ENCODE measurements at regions of chr2 and their contacts with region 1.

Region 1: GRCh38 chr2:230712443-230713330 is at the start of gene CAB39:
- DNase-seq: peak; percentile 93
- H3K4me3 ChIP-seq: peak within 1 kb of the TSS; percentile 90 to 100 (median 96)
- H3K27ac ChIP-seq: peak within 1 kb of the TSS; percentile 94 to 99 (median 98)
- H3K4me1 ChIP-seq: peaks cover 0 to 45% (median 38%) of the 10 kb centered on the region in 4 donors
- H3K27me3 ChIP-seq: no peaks in the 10 kb centered on the region
- CTCF ChIP-seq: peak in 3 of 4 experiments; percentile 27 to 81 (median 50)
- EP300 ChIP-seq: no peak
- POLR2A ChIP-seq: peak in 1 of 2 donors; percentile 20
- total RNA-seq, gene CAB39: 63.7 to 77.9 (median 73.4) TPM

Region 2: GRCh38 chr2:230798769-230799399 is 86.2 kb after region 1 on chr2:
- intact Hi-C with region 1: loop called (anchors 1 kb)
- DNase-seq: no peak
- H3K4me3 ChIP-seq: no peak overlapping the region
- H3K27ac ChIP-seq: peak overlapping the region in 1 of 4 donors; percentile 85
- H3K4me1 ChIP-seq: peaks cover 0 to 43% (median 31%) of the 10 kb centered on the region in 4 donors
- H3K27me3 ChIP-seq: no peaks in the 10 kb centered on the region
- CTCF ChIP-seq: peak; percentile 11 to 58 (median 49)
- EP300 ChIP-seq: no peak
- POLR2A ChIP-seq: no peak

Region 3: DNA sequence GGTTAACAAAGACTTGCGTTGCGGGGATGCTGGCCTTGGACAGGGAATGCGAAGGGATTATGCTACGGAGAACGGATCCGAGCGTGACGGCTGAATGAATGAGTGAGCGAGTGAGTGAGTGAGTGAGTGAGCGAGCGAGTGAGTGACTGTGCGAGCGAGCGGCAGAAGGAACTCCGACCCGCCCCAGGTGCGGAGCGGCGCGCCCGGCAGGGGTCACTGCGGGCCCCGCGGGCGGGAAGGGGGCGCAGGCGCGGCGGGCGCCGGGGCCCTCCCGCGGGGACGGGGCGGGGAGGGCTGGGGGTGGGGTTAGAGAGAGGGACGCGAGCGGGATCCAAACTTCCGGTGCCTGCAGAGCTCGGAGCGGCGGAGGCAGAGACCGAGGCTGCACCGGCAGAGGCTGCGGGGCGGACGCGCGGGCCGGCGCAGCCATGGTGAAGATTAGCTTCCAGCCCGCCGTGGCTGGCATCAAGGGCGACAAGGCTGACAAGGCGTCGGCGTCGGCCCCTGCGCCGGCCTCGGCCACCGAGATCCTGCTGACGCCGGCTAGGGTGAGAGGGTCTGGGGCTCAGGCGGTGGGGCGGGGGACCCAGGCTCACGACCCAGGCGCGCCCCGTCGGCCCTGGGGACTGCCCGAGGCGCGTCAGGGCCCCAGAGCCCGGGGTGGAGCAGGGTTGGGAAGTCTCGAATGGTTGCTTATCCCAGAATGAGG is 152.1 kb after region 1 on chr2 and contains the start of gene ITM2C:
- intact Hi-C with region 1: loop called (anchors 5 kb)
- DNase-seq: peak; percentile 84
- H3K4me3 ChIP-seq: peak within 1 kb of the TSS; percentile 66 to 84 (median 78)
- H3K27ac ChIP-seq: peak within 1 kb of the TSS; percentile 71 to 88 (median 82)
- H3K4me1 ChIP-seq: peaks cover 0 to 51% (median 47%) of the 10 kb centered on the region in 4 donors
- H3K27me3 ChIP-seq: no peaks in the 10 kb centered on the region
- CTCF ChIP-seq: peak in 1 of 4 experiments; percentile 35
- EP300 ChIP-seq: no peak
- POLR2A ChIP-seq: peak; percentile 61 to 67
- total RNA-seq, gene ITM2C: 107 to 206 (median 117) TPM

Measured in sigmoid colon (tissue), 7 donors.